Right cardiac atrium (tissue), 5 donors: ENCODE measurements at regions of chr6 and their contacts with region 1.

Region 1: GRCh38 chr6:29016559-29017427 is 11.7 kb upstream of the ZNF311 start:
- DNase-seq: peak; percentile 69 to 90 (median 83)
- ATAC-seq: peak; percentile 94 to 96
- H3K4me3 ChIP-seq: peak overlapping the region; percentile 61
- H3K27ac ChIP-seq: no peak overlapping the region
- H3K4me1 ChIP-seq: no peaks in the 10 kb centered on the region
- H3K27me3 ChIP-seq: no peaks in the 10 kb centered on the region

Region 2: GRCh38 chr6:28683944-28684538 is 332.8 kb before region 1 on chr6:
- intact Hi-C with region 1: loop called in 2 of 4 experiments (anchors 1 to 5 kb)
- DNase-seq: no peak
- ATAC-seq: peak in 1 of 2 donors; percentile 64
- H3K4me3 ChIP-seq: peak overlapping the region; percentile 38
- H3K27ac ChIP-seq: no peak overlapping the region
- H3K4me1 ChIP-seq: no peaks in the 10 kb centered on the region
- H3K27me3 ChIP-seq: no peaks in the 10 kb centered on the region

Region 3: GRCh38 chr6:28695715-28696114 is 321.1 kb before region 1 on chr6:
- intact Hi-C with region 1: loop called in 1 of 4 experiments (anchors 2 kb)
- DNase-seq: no peak
- ATAC-seq: peak in 1 of 2 donors; percentile 61
- H3K4me3 ChIP-seq: no peak overlapping the region
- H3K27ac ChIP-seq: no peak overlapping the region
- H3K4me1 ChIP-seq: peaks cover 3% of the 10 kb centered on the region
- H3K27me3 ChIP-seq: no peaks in the 10 kb centered on the region

Region 4: GRCh38 chr6:28838634-28839442 is 178.0 kb before region 1 on chr6:
- intact Hi-C with region 1: loop called (anchors 2 to 10 kb)
- DNase-seq: peak; percentile 84 to 93 (median 92)
- ATAC-seq: peak; percentile 94 to 97
- H3K4me3 ChIP-seq: peak overlapping the region; percentile 73
- H3K27ac ChIP-seq: peak overlapping the region; percentile 53
- H3K4me1 ChIP-seq: no peaks in the 10 kb centered on the region
- H3K27me3 ChIP-seq: no peaks in the 10 kb centered on the region

Region 5: GRCh38 chr6:28953039-28953584 is 63.7 kb before region 1 on chr6:
- intact Hi-C with region 1: no loop called
- DNase-seq: peak in 1 of 3 donors; percentile 60
- ATAC-seq: peak; percentile 76 to 81
- H3K4me3 ChIP-seq: peak overlapping the region; percentile 74
- H3K27ac ChIP-seq: no peak overlapping the region
- H3K4me1 ChIP-seq: no peaks in the 10 kb centered on the region
- H3K27me3 ChIP-seq: no peaks in the 10 kb centered on the region

Region 6: GRCh38 chr6:29617782-29618557 is 601.2 kb after region 1 on chr6:
- intact Hi-C with region 1: no loop called
- DNase-seq: no peak
- ATAC-seq: no peak
- H3K4me3 ChIP-seq: no peak overlapping the region
- H3K27ac ChIP-seq: no peak overlapping the region
- H3K4me1 ChIP-seq: no peaks in the 10 kb centered on the region
- H3K27me3 ChIP-seq: no peaks in the 10 kb centered on the region